Activated naive CD4-positive, alpha-beta T cell treated with anti-CD3 and anti-CD28 coated beads, Interleukin-2, amount 10 ng/mL, durations not matched to agents 7 days and 5 days (primary cell): ENCODE measurements at regions of chr11 and their contacts with region 1.

Region 1: GRCh38 chr11:45371251-45372115 is 85.3 kb upstream of the SYT13 start:
- DNase-seq: peak; percentile 76
- H3K4me3 Mint-ChIP-seq: no peak overlapping the region
- H3K27ac Mint-ChIP-seq: no peak overlapping the region
- H3K4me1 Mint-ChIP-seq: peaks cover 5% of the 10 kb centered on the region
- H3K27me3 Mint-ChIP-seq: peaks cover 70% of the 10 kb centered on the region

Region 2: GRCh38 chr11:45385844-45386243 is 14.4 kb after region 1 on chr11:
- CTCF ChIA-PET with region 1: interaction called, 12 read pairs
- DNase-seq: no peak
- H3K4me3 Mint-ChIP-seq: no peak overlapping the region
- H3K27ac Mint-ChIP-seq: no peak overlapping the region
- H3K4me1 Mint-ChIP-seq: peaks cover 8% of the 10 kb centered on the region
- H3K27me3 Mint-ChIP-seq: peaks cover 55% of the 10 kb centered on the region

Region 3: DNA sequence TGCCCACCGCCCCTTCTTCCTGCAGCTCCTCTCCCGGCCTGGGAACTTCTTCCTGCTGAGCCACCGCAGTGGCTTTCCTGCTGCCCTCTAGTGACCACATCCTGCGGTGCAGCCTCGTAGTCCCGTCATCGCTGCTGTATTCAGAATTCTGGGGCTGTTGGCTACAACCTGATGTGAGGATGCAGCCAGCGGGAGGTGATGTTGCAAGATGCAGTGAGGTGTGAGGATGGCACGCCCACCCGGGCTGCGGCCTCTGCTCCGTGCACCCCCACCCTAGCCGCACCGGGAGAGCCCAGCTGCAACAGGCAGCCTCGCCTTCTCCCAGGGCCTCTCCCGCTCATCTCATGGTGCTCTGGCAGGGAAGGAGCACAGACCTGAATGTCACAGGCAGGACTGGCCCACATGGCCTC is 283.9 kb after region 1 on chr11:
- CTCF ChIA-PET with region 1: interaction called, 31 read pairs
- DNase-seq: peak; percentile 69
- H3K4me3 Mint-ChIP-seq: no peak overlapping the region
- H3K27ac Mint-ChIP-seq: no peak overlapping the region
- H3K4me1 Mint-ChIP-seq: no peaks in the 10 kb centered on the region
- H3K27me3 Mint-ChIP-seq: peaks cover 66% of the 10 kb centered on the region